Activated T-helper 1 cell treated with anti-CD3 and anti-CD28 coated beads, Interleukin-12 subunit alpha, Interleukin-12 subunit beta, Interleukin-2, Interleukin-4 antibody, amounts not matched to agents 30 ng/mL and 10 ng/mL and 1 ng/mL, durations not matched to agents 14 hours and 24 hours and 36 hours (primary cell): ENCODE measurements at regions of chr5 and their contacts with region 1.

Region 1: GRCh38 chr5:108681079-108681921 is 66.4 kb upstream of the FER start:
- DNase-seq: no peak
- H3K4me3 Mint-ChIP-seq: no peak overlapping the region
- H3K27ac Mint-ChIP-seq: no peak overlapping the region
- H3K4me1 Mint-ChIP-seq: no peaks in the 10 kb centered on the region
- H3K27me3 Mint-ChIP-seq: peaks cover 15% of the 10 kb centered on the region

Region 2: GRCh38 chr5:108521841-108522506 is 159.3 kb before region 1 on chr5:
- intact Hi-C with region 1: loop called (anchors 5 kb)
- DNase-seq: no peak
- H3K4me3 Mint-ChIP-seq: no peak overlapping the region
- H3K27ac Mint-ChIP-seq: no peak overlapping the region
- H3K4me1 Mint-ChIP-seq: no peaks in the 10 kb centered on the region
- H3K27me3 Mint-ChIP-seq: peaks cover 3% of the 10 kb centered on the region

Region 3: DNA sequence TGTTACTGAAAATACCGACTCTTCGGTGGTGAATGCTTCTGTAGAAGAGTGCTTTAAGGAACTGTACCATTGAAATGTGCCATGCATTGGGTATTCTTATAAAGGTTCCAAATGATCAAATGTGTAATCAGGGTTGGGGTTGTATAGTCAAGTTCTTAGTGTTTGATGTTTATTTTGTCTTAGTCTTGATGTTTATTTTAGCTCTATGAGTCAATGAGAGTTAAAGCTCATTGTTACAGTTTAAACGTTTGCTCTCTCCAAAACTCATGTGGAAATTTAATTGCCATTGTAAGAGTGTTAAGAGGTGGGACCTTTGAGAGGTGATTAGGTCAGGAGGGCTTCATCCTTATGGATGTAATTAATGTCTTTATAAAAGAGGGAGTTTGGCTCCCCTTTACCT is 219.4 kb after region 1 on chr5:
- intact Hi-C with region 1: loop called (anchors 10 kb)
- DNase-seq: no peak
- H3K4me3 Mint-ChIP-seq: no peak overlapping the region
- H3K27ac Mint-ChIP-seq: no peak overlapping the region
- H3K4me1 Mint-ChIP-seq: no peaks in the 10 kb centered on the region
- H3K27me3 Mint-ChIP-seq: no peaks in the 10 kb centered on the region

Region 4: GRCh38 chr5:108966910-108967309 is 285.6 kb after region 1 on chr5:
- intact Hi-C with region 1: loop called (anchors 10 kb)
- DNase-seq: no peak
- H3K4me3 Mint-ChIP-seq: no peak overlapping the region
- H3K27ac Mint-ChIP-seq: no peak overlapping the region
- H3K4me1 Mint-ChIP-seq: no peaks in the 10 kb centered on the region
- H3K27me3 Mint-ChIP-seq: no peaks in the 10 kb centered on the region

Region 5: DNA sequence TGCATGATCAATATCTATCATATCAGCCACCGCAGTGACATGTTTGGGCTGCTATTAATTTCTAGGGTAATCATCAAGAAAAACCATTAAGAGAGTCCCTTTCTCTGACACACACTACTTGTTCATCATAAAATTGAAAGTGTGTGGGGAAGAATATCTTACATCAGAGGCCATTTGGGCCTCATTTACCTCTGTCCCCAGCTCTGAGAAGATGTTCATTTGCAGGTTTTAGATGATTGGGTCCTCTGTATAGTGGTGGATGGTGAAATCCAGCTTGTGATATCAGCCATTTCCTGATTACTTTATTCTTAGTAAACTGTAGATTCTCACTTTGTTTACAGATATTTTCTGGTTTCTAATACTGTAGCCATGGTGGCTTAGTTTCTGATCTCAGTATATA is 758.3 kb after region 1 on chr5:
- intact Hi-C with region 1: loop called (anchors 1 kb)
- DNase-seq: no peak
- H3K4me3 Mint-ChIP-seq: no peak overlapping the region
- H3K27ac Mint-ChIP-seq: no peak overlapping the region
- H3K4me1 Mint-ChIP-seq: no peaks in the 10 kb centered on the region
- H3K27me3 Mint-ChIP-seq: no peaks in the 10 kb centered on the region

Region 6: DNA sequence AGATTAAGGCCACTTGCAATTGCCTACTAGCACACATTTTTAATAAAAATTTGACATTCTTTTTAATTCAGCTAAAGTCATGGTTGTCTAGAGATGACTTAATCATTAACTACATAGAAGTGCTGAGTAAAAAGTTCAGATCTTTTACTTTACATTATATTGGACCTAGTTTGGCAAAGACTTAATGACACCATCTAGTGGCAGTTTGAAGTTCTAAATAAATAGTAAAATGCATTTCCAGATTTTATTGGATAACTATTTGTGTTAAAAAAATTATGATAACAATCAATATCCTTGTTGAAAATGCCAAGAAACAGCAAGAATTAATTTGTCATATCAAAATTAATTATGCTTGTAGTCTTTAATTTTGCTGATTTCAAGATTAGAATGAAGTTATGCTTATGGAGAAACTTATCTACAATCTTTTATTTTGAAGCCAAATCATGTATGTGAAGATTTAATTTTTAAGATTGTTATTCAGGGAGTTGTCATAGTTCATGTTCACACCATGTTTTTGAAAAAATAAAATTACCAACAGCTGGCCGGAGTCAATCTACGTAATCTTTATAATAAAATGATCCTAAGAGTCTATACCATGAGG is 798.1 kb after region 1 on chr5:
- intact Hi-C with region 1: loop called (anchors 1 kb)
- DNase-seq: no peak
- H3K4me3 Mint-ChIP-seq: no peak overlapping the region
- H3K27ac Mint-ChIP-seq: no peak overlapping the region
- H3K4me1 Mint-ChIP-seq: no peaks in the 10 kb centered on the region
- H3K27me3 Mint-ChIP-seq: peaks cover 2% of the 10 kb centered on the region